ENCODE measurements at regions of chr4 and their contacts with region 1.

Region 1: DNA sequence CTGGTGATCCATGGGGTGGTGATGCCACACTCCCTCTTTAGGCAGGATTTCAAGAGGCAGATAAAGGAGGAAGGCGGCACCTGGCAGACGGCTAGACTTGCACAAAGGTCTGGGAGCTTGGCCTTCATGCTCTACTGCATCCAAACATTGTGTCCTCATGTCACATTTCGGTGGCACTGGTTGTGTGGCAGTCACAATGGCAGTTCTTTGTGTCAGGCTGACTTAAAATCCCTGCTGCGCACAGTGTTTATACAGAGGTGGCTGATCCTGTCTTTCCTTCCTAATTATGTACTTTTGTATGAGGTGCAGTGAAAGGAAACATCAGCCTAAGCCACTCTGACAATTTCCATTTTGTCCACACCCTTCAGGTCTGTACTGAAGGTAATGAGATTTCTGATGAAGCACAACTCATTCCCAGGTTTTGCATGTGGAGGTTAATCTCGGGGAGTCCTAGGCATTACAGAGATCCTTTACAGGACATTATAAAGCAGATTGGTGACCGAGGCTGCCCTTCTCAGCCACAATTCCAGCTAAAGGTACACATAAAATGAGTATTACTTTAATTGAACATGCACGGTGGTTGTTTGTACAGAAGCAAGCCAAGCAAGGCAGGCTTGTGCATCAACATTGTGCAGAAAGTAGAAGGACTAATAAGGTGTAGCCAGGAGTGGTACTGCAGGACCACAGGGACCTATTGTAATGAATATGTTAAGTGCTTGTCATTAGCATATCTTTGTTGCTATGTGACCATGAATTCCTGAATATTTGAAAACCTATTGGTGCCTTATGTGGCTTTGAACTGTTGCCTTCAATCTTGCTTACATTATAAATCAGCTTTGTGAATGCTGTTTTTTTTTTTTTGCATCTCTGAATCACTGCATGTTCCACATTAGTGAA is 147.6 kb downstream of the STK32B start:
- DNase-seq: no peak
- ATAC-seq: no peak
- H3K4me3 ChIP-seq: no peak overlapping the region
- H3K27ac ChIP-seq: no peak overlapping the region
- H3K4me1 ChIP-seq: no peaks in the 10 kb centered on the region
- H3K27me3 ChIP-seq: no peaks in the 10 kb centered on the region
- CTCF ChIP-seq: no peak
- POLR2A ChIP-seq: no peak
- RAD21 ChIP-seq: no peak

Region 2: DNA sequence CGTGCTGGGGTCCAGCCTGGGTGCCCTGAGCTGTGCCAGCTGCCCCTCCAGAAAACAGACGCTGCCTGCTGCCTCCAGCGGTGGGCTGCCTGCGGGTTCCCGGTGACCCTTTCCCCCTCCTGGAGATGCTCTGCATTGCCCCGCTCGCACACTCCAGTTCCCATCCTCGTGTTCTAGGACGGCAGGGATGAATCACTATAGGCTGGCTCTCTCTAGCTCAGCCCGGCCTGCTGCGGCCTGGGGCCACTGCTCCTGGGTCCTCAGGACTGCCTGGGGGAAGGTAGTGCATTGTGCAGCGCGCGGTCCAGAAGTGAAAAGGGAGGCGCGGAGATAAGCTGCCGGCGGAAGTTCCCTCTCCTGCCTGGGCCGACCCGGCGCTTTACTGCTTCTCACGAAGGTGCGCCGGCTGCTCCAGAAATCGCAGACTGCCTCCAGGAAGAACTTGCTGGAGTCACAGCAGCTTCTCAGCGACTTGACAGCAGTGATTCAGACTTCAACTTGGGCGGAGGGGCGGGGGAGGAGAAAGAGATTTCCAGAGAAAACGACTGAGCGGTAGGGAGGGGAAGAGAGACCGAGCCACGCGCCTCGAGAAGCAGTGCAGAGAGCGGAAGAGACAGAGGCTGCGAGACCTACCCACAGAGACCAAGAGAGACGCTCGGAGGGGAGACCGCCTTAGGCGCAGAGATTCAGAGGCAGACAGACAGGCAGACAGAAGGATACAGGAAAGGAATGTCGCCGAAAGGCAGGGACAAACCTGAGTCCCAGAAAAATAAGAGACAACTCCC is 346.1 kb before region 1 on chr4:
- CTCF ChIA-PET with region 1: no interaction called
- POLR2A ChIA-PET with region 1: interaction called, 12 read pairs
- dilution Hi-C with region 1: no loop called
- in situ Hi-C with region 1: no loop called
- intact Hi-C with region 1: no loop called
- DNase-seq: peak; percentile 76
- ATAC-seq: peak; percentile 80
- H3K4me3 ChIP-seq: peak overlapping the region; percentile 0
- H3K27ac ChIP-seq: no peak overlapping the region; the same call in 1 of the 2 replicates
- H3K4me1 ChIP-seq: no peaks in the 10 kb centered on the region; the same call in 1 of the 2 replicates
- H3K27me3 ChIP-seq: peaks cover 40% of the 10 kb centered on the region
- CTCF ChIP-seq: peak; percentile 27; the same call in 1 of the 2 replicates
- POLR2A ChIP-seq: no peak; the same call in 1 of the 2 replicates
- RAD21 ChIP-seq: no peak

Region 3: GRCh38 chr4:4995103-4995907 is 203.6 kb before region 1 on chr4:
- CTCF ChIA-PET with region 1: no interaction called
- POLR2A ChIA-PET with region 1: no interaction called
- dilution Hi-C with region 1: no loop called
- in situ Hi-C with region 1: no loop called
- intact Hi-C with region 1: no loop called
- DNase-seq: peak; percentile 58
- ATAC-seq: peak; percentile 83
- H3K4me3 ChIP-seq: no peak overlapping the region
- H3K27ac ChIP-seq: no peak overlapping the region
- H3K4me1 ChIP-seq: peaks cover 12% of the 10 kb centered on the region
- H3K27me3 ChIP-seq: no peaks in the 10 kb centered on the region; the same call in 1 of the 2 replicates
- CTCF ChIP-seq: peak; percentile 86
- POLR2A ChIP-seq: 0 out of 2 replicates have a peak, but pooled peaks have one; percentile 20
- RAD21 ChIP-seq: peak; percentile 92

Region 4: DNA sequence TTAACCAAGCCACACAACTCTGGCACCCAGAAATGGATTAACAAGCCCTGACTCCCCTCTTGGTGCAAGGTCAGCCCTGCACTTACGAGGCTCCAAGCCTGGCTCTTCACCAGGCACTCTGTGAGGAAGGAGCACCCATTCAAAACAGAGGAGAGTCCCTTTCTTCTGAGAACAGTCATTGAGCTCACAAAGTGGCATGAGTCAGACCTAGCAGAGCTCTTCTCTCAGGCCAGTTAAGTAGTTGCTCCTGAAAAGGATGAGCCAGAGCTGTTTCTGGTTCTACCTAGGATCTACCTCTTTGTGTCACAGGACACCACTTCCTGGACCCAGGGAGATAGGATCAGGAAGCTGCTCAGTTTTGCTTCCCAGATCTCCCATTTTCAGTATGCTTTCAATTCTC is 461.3 kb after region 1 on chr4:
- CTCF ChIA-PET with region 1: no interaction called
- POLR2A ChIA-PET with region 1: no interaction called
- dilution Hi-C with region 1: no loop called
- in situ Hi-C with region 1: no loop called
- intact Hi-C with region 1: no loop called
- DNase-seq: peak; percentile 52
- ATAC-seq: peak; percentile 54; the same call in 1 of the 2 replicates
- H3K4me3 ChIP-seq: no peak overlapping the region
- H3K27ac ChIP-seq: no peak overlapping the region
- H3K4me1 ChIP-seq: no peaks in the 10 kb centered on the region
- H3K27me3 ChIP-seq: no peaks in the 10 kb centered on the region
- CTCF ChIP-seq: no peak
- POLR2A ChIP-seq: no peak
- RAD21 ChIP-seq: no peak

Measured in IMR-90 (cell line).